ENCODE measurements at regions of chr3 and their contacts with region 1.

Region 1: DNA sequence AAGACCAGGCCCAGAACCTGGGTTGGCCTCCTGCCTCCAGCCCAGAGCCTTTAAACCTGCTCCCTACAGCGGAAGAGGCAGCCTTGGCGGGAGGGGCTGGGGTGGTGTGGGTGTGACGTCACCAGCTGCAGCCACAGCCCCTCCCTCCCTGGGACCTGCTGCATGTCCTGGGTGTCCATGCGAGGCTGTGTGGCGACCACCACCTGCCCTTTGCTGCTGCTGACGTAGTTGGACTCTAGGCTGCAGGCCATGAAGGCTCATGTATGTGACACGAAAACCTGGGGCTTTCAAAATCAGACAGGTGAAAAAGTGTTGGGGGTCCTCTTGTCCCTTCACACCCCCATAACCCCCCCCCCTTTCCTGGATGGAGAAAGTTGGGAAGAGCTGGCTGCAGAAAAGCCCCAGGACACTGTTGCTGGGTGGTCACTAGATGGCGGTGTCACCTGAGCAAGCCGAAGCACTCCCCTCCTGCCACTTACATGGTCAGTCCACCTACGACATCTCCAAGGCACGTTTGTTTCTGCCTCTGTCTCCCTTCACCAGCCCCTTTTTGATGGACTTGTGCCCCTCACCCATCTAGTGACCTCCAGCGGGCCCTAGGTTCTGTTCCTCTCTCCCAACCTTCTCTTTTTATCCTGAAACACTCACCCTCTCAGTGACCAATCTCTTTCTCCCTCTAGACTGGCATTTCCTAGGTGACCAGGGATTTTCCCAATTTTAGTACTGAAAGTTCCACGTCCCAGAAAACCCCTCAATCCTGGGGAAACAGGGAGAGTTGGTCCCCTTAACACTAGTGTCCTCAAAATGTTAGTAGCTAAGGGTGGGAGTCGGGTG is 35.2 kb downstream of the SLC6A20 start:
- DNase-seq: peak in 7 of 9 donors; percentile 10 to 46 (median 33)
- ATAC-seq: peak; percentile 71
- H3K4me3 ChIP-seq: no peak overlapping the region
- H3K4me3 Mint-ChIP-seq: peak overlapping the region in 1 of 10 donors; percentile 16
- H3K27ac ChIP-seq: no peak overlapping the region
- H3K27ac Mint-ChIP-seq: no peak overlapping the region
- H3K4me1 ChIP-seq: no peaks in the 10 kb centered on the region
- H3K4me1 Mint-ChIP-seq: peaks cover 0 to 6% (median 3%) of the 10 kb centered on the region in 7 donors
- H3K27me3 ChIP-seq: no peaks in the 10 kb centered on the region
- H3K27me3 Mint-ChIP-seq: peaks cover 0 to 10% (median 3%) of the 10 kb centered on the region in 5 donors

Region 2: GRCh38 chr3:46378426-46378942 is 617.4 kb after region 1 on chr3:
- CTCF ChIA-PET with region 1: interaction called, 3 read pairs
- POLR2A ChIA-PET with region 1: no interaction called
- intact Hi-C with region 1: loop called in 1 of 2 experiments (anchors 5 kb)
- DNase-seq: peak; percentile 24 to 67 (median 46)
- ATAC-seq: peak; percentile 68
- H3K4me3 ChIP-seq: no peak overlapping the region
- H3K4me3 Mint-ChIP-seq: peak overlapping the region in 1 of 10 donors; percentile 8
- H3K27ac ChIP-seq: no peak overlapping the region
- H3K27ac Mint-ChIP-seq: peak overlapping the region in 2 of 9 donors; percentile 0 to 4
- H3K4me1 ChIP-seq: peaks cover 3 to 40% of the 10 kb centered on the region in 2 donors
- H3K4me1 Mint-ChIP-seq: peaks cover 23 to 48% (median 43%) of the 10 kb centered on the region in 7 donors
- H3K27me3 ChIP-seq: no peaks in the 10 kb centered on the region
- H3K27me3 Mint-ChIP-seq: peaks cover 0 to 24% (median 0%) of the 10 kb centered on the region in 5 donors

Measured in naive thymus-derived CD4-positive, alpha-beta T cell (primary cell).